ENCODE measurements at regions of chr9 and their contacts with region 1.

Region 1: GRCh38 chr9:32403567-32404260 is 19.3 kb downstream of the ACO1 start:
- DNase-seq: no peak
- ATAC-seq: no peak
- H3K4me3 ChIP-seq: no peak overlapping the region
- H3K27ac ChIP-seq: no peak overlapping the region
- H3K4me1 ChIP-seq: peaks cover 0 to 19% (median 0%) of the 10 kb centered on the region in 12 donors
- H3K27me3 ChIP-seq: no peaks in the 10 kb centered on the region
- CTCF ChIP-seq: no peak
- POLR2A ChIP-seq: no peak

Region 2: GRCh38 chr9:31824860-31825259 is 578.9 kb before region 1 on chr9:
- intact Hi-C with region 1: no loop called
- DNase-seq: no peak
- ATAC-seq: no peak
- H3K4me3 ChIP-seq: no peak overlapping the region
- H3K27ac ChIP-seq: no peak overlapping the region
- H3K4me1 ChIP-seq: no peaks in the 10 kb centered on the region
- H3K27me3 ChIP-seq: no peaks in the 10 kb centered on the region
- CTCF ChIP-seq: no peak
- POLR2A ChIP-seq: no peak

Region 3: DNA sequence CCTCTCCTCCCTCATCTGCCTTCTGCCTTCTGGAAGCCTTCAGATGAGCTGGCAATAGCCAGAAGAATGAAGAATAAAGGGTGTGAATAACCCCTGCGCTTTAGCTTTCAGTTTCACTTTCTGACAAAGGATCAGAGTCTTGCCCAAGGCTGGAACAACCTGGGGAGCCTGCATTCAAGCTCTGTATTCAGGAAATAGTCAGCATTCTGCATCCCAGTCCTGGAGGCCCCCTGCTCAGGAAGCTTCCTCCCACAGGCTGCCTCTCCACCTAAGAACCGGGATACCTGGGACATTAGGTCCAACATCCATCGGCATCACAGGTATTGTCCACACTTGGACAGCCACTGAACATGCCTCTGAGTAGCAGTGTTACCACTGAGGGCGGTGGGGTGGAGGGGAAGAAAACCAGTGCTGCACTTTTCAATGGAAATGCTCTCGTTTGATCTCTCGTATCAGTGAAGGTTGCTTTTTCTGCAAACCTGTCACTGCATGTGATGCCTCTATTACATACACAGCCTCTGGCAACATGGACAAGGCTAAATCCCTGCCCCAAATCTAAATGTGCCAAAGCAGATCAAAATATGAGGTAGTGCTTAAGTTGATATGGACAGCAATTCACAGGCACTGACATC is 59.0 kb before region 1 on chr9:
- intact Hi-C with region 1: loop called in 1 of 10 experiments (anchors 10 kb)
- DNase-seq: no peak
- ATAC-seq: peak in 1 of 4 donors; percentile 32
- H3K4me3 ChIP-seq: peak overlapping the region in 1 of 12 donors; percentile 17
- H3K27ac ChIP-seq: no peak overlapping the region
- H3K4me1 ChIP-seq: no peaks in the 10 kb centered on the region
- H3K27me3 ChIP-seq: no peaks in the 10 kb centered on the region
- CTCF ChIP-seq: no peak
- POLR2A ChIP-seq: no peak

Measured in heart left ventricle (tissue), 16 donors.